Endothelial cell of umbilical vein (primary cell): ENCODE measurements at regions of chr19 and their contacts with region 1.

Region 1: GRCh38 chr19:49363268-49364082 is at the start of gene DKKL1:
- DNase-seq: peak; percentile 100
- H3K4me3 ChIP-seq: peak within 1 kb of the TSS; percentile 83 to 97 (median 95)
- H3K27ac ChIP-seq: peak within 1 kb of the TSS; percentile 91
- H3K4me1 ChIP-seq: peaks cover 13% of the 10 kb centered on the region
- H3K27me3 ChIP-seq: no peaks in the 10 kb centered on the region
- CTCF ChIP-seq: no peak
- POLR2A ChIP-seq: no peak
- total RNA-seq, gene DKKL1: not detected in 2 replicates

Region 2: DNA sequence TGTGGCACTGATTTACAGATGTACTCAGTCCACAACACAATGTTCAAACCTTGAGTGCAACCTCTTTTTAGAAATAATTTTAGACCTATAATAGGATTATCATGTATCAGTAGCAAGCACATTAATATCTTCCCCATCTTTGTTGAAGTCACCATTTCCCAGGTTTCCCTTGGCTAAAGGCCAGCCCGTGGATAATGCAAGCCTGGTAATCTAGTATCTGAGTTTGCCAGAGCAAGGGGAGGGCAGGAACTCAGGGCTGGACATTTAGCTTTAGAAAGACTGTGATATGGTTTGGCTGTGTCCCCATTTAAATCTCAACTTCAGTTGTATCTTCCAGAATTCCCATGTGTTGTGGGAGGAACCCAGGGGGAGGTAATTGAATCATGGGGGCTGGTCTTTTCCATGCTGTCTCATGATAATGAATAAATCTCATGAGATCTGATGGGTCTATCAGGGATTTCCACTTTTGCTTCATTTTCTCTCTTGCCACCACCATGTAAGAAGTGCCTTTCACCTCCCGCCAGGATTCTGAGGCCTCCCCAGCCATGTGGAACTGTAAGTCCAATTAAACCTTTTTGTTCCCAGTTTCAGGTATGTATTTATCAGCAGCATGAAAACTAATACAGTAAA is 76.2 kb before region 1 on chr19:
- CTCF ChIA-PET with region 1: no interaction called
- POLR2A ChIA-PET with region 1: no interaction called
- dilution Hi-C with region 1: no loop called
- intact Hi-C with region 1: no loop called
- DNase-seq: no peak
- H3K4me3 ChIP-seq: no peak overlapping the region
- H3K27ac ChIP-seq: no peak overlapping the region
- H3K4me1 ChIP-seq: no peaks in the 10 kb centered on the region
- H3K27me3 ChIP-seq: peaks cover 0 to 3% of the 10 kb centered on the region in 2 experiments
- CTCF ChIP-seq: no peak
- POLR2A ChIP-seq: no peak

Region 3: GRCh38 chr19:49391581-49392399 is 28.3 kb after region 1 on chr19:
- CTCF ChIA-PET with region 1: interaction called, 3 read pairs
- POLR2A ChIA-PET with region 1: no interaction called
- dilution Hi-C with region 1: no loop called
- intact Hi-C with region 1: loop called (anchors 2 kb)
- DNase-seq: peak; percentile 55
- H3K4me3 ChIP-seq: no peak overlapping the region
- H3K27ac ChIP-seq: no peak overlapping the region
- H3K4me1 ChIP-seq: no peaks in the 10 kb centered on the region
- H3K27me3 ChIP-seq: peaks cover 0 to 2% of the 10 kb centered on the region in 2 experiments
- CTCF ChIP-seq: peak; percentile 68 to 81
- POLR2A ChIP-seq: no peak